ENCODE measurements at regions of chr13 and their contacts with region 1.

Region 1: DNA sequence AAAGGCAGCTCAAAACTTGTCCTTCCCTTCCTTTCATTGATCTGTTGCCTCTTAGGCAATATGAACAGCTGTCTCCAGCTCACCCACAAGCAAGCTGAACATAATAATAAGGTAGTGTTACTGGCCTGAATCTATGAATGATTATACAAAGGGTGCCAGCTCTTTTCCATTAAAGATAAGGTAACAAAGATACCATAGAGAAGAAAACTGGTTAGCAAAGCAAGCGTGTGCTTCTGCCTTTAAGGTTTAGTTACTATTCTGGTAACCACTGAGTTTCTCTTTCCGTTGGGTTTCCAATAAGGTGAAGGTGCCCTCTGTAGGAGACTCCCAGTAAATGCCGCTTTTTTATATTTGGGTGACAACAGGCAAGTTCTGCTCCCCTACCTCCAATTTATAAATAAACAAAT is 12.1 kb upstream of the DACH1 start:
- DNase-seq: no peak
- H3K4me3 Mint-ChIP-seq: no peak overlapping the region
- H3K27ac Mint-ChIP-seq: no peak overlapping the region
- H3K4me1 Mint-ChIP-seq: peaks cover 4% of the 10 kb centered on the region
- H3K27me3 Mint-ChIP-seq: peaks cover 4% of the 10 kb centered on the region

Region 2: DNA sequence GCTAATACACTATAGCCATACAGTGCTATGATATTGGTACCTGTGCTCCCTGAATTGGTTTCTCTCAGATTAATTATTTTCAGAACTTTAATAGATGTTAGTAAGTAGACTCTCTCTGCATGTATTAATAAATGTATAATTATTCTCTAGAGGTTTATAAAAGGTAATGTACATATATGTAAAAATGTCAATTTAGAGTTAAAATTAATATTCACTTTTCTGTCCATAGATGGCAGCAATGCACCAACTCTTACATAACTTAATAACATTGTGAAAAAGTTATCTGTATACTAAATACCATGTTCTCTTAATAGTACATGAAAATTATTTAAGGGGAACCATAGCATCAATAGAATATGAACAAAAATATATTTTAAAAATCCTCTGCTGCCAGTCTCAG is 1255.9 kb before region 1 on chr13:
- intact Hi-C with region 1: loop called (anchors 2 kb)
- DNase-seq: no peak
- H3K4me3 Mint-ChIP-seq: no peak overlapping the region
- H3K27ac Mint-ChIP-seq: no peak overlapping the region
- H3K4me1 Mint-ChIP-seq: no peaks in the 10 kb centered on the region
- H3K27me3 Mint-ChIP-seq: no peaks in the 10 kb centered on the region

Region 3: GRCh38 chr13:70960841-70961443 is 918.2 kb before region 1 on chr13:
- intact Hi-C with region 1: loop called (anchors 2 kb)
- DNase-seq: no peak
- H3K4me3 Mint-ChIP-seq: no peak overlapping the region
- H3K27ac Mint-ChIP-seq: no peak overlapping the region
- H3K4me1 Mint-ChIP-seq: no peaks in the 10 kb centered on the region
- H3K27me3 Mint-ChIP-seq: no peaks in the 10 kb centered on the region

Region 4: GRCh38 chr13:71320452-71320851 is 558.7 kb before region 1 on chr13:
- intact Hi-C with region 1: loop called (anchors 1 kb)
- DNase-seq: no peak
- H3K4me3 Mint-ChIP-seq: no peak overlapping the region
- H3K27ac Mint-ChIP-seq: no peak overlapping the region
- H3K4me1 Mint-ChIP-seq: no peaks in the 10 kb centered on the region
- H3K27me3 Mint-ChIP-seq: peaks cover 1% of the 10 kb centered on the region

Region 5: GRCh38 chr13:71587817-71588216 is 291.3 kb before region 1 on chr13:
- intact Hi-C with region 1: no loop called
- DNase-seq: no peak
- H3K4me3 Mint-ChIP-seq: no peak overlapping the region
- H3K27ac Mint-ChIP-seq: no peak overlapping the region
- H3K4me1 Mint-ChIP-seq: no peaks in the 10 kb centered on the region
- H3K27me3 Mint-ChIP-seq: no peaks in the 10 kb centered on the region

Region 6: GRCh38 chr13:71770710-71771109 is 108.4 kb before region 1 on chr13:
- intact Hi-C with region 1: no loop called
- DNase-seq: no peak
- H3K4me3 Mint-ChIP-seq: no peak overlapping the region
- H3K27ac Mint-ChIP-seq: no peak overlapping the region
- H3K4me1 Mint-ChIP-seq: no peaks in the 10 kb centered on the region
- H3K27me3 Mint-ChIP-seq: no peaks in the 10 kb centered on the region

Region 7: GRCh38 chr13:71867131-71867814 is 11.9 kb before region 1 on chr13 and contains the start of gene DACH1:
- intact Hi-C with region 1: no loop called
- DNase-seq: no peak
- H3K4me3 Mint-ChIP-seq: peak within 1 kb of the TSS; percentile 63
- H3K27ac Mint-ChIP-seq: no peak within 1 kb of the TSS
- H3K4me1 Mint-ChIP-seq: peaks cover 19% of the 10 kb centered on the region
- H3K27me3 Mint-ChIP-seq: peaks cover 74% of the 10 kb centered on the region
- total RNA-seq, gene DACH1: not detected in 2 replicates

Measured in activated T-helper 1 cell treated with anti-CD3 and anti-CD28 coated beads, Interleukin-12 subunit alpha, Interleukin-12 subunit beta, Interleukin-2, Interleukin-4 antibody, amounts not matched to agents 30 ng/mL and 10 ng/mL and 1 ng/mL, durations not matched to agents 14 hours and 24 hours and 36 hours (primary cell).